ENCODE measurements at regions of chr17 and their contacts with region 1.

Region 1: DNA sequence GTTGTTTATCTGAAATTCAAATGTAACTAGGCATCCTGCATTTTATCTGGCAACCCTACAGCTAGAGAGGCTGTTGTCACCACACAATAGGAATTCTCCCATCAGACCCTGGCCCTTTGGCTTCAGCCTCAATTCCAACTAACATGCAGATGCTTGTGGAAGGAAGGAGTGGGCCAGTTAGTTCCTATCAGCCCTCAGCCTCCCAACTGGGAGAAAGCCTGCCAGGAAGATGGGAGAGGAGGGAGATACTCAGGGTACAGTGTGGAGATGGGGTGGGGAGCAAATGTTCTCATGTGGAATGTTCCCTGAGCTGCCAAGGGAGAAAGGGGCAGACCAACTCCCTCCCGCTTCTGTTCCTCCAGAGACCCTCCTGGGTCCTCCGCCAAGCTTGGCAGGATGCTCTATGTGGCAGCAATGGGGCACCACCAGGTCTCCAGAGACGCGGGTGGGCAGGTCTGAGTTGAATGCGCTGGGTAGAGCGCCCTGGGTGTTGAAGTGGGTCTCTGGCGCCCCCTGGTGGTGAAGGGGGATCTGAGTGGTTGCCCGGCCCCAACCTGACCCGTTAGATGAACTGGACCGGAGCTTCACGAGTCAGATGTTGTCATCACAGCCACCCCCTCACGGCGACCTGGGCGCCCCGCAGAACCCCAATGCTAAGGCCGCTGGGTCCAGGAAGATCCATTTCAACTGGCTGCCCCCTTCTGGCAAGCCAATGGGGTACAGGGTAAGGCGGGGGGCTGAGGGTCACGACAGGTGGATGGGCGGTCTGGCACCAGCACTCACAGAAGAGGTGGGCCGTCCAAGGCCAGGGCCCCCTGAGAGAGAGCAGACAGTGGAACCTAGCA is 15.2 kb downstream of the GALK1 start:
- DNase-seq: peak; percentile 88
- H3K4me3 ChIP-seq: peak overlapping the region; percentile 19
- H3K27ac ChIP-seq: no peak overlapping the region
- H3K4me1 ChIP-seq: peaks cover 30% of the 10 kb centered on the region
- H3K27me3 ChIP-seq: no peaks in the 10 kb centered on the region
- CTCF ChIP-seq: peak; percentile 96

Region 2: DNA sequence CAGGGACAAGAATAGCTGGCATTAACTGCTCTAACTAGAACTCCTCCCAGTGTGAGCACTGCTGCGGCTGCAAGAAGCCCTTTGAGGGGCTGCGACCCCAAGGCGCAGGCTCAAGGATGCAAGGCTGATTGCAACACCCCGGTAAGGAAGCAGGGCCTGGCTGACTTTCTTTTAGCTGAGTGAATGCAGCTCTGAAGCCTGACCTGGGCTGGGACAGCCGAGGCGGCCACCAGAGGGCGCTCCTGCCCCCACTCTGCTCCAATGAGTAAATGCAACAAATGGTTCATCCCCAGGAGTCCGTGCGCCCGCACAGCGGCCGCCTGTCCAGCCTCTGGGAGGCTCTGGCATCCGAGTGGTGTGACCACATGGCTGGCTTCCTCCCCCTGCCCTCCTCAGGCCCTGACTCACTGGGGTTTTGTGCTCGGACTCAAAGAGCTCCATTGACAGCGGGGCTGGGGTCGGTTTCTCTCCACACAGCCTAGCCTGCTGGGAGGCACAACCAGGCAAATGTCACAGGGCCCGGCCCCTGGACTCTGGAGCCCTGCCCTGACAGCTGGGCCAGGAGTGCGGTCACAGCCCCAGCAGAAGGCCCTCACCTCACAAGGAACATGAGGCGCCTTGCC is 116.8 kb before region 1 on chr17 and contains the start of gene SMIM5:
- intact Hi-C with region 1: loop called (anchors 5 kb)
- DNase-seq: peak; percentile 87
- H3K4me3 ChIP-seq: peak within 1 kb of the TSS; percentile 64
- H3K27ac ChIP-seq: peak within 1 kb of the TSS; percentile 92
- H3K4me1 ChIP-seq: peaks cover 55% of the 10 kb centered on the region
- H3K27me3 ChIP-seq: no peaks in the 10 kb centered on the region
- CTCF ChIP-seq: peak; percentile 99
- total RNA-seq, gene SMIM5: 14.0 TPM

Region 3: GRCh38 chr17:75679706-75680442 is 69.9 kb before region 1 on chr17:
- intact Hi-C with region 1: loop called (anchors 2 kb)
- DNase-seq: no peak
- H3K4me3 ChIP-seq: no peak overlapping the region
- H3K27ac ChIP-seq: peak overlapping the region; percentile 87
- H3K4me1 ChIP-seq: peaks cover 60% of the 10 kb centered on the region
- H3K27me3 ChIP-seq: no peaks in the 10 kb centered on the region
- CTCF ChIP-seq: peak; percentile 60

Measured in left ventricle myocardium inferior (tissue), 1 donor.